ENCODE measurements at regions of chr2 and their contacts with region 1.

Region 1: GRCh38 chr2:47360927-47361326 is 42.0 kb upstream of the MSH2 start:
- DNase-seq: no peak
- ATAC-seq: no peak
- H3K4me3 Mint-ChIP-seq: no peak overlapping the region
- H3K27ac Mint-ChIP-seq: no peak overlapping the region
- H3K4me1 Mint-ChIP-seq: no peaks in the 10 kb centered on the region
- H3K27me3 Mint-ChIP-seq: peaks cover 4% of the 10 kb centered on the region
- CTCF ChIP-seq: no peak

Region 2: DNA sequence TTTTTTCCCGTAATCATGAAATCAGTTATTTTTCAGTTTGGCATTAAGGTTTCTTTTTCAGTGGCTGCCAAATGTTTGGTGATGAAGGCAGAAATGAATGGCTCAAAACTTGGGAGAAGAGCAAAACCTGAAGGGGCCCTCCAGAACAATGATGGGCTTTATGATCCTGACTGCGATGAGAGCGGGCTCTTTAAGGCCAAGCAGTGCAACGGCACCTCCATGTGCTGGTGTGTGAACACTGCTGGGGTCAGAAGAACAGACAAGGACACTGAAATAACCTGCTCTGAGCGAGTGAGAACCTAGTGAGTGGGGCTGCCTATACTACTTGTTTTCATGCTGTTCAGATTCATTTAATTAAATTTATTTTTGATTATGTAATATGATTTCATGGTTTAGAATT is 12.8 kb after region 1 on chr2:
- CTCF ChIA-PET with region 1: no interaction called
- POLR2A ChIA-PET with region 1: interaction called, 11 read pairs
- intact Hi-C with region 1: no loop called
- DNase-seq: no peak
- ATAC-seq: no peak
- H3K4me3 Mint-ChIP-seq: no peak overlapping the region
- H3K27ac Mint-ChIP-seq: no peak overlapping the region
- H3K4me1 Mint-ChIP-seq: peaks cover 1% of the 10 kb centered on the region
- H3K27me3 Mint-ChIP-seq: peaks cover 10% of the 10 kb centered on the region
- CTCF ChIP-seq: no peak